ENCODE measurements at regions of chr10 and their contacts with region 1.

Region 1: GRCh38 chr10:31372439-31372838 is 53.4 kb downstream of the ZEB1 start:
- DNase-seq: no peak
- ATAC-seq: no peak
- H3K4me3 ChIP-seq: no peak overlapping the region
- H3K27ac ChIP-seq: no peak overlapping the region
- H3K4me1 ChIP-seq: no peaks in the 10 kb centered on the region
- H3K27me3 ChIP-seq: no peaks in the 10 kb centered on the region
- CTCF ChIP-seq: no peak

Region 2: DNA sequence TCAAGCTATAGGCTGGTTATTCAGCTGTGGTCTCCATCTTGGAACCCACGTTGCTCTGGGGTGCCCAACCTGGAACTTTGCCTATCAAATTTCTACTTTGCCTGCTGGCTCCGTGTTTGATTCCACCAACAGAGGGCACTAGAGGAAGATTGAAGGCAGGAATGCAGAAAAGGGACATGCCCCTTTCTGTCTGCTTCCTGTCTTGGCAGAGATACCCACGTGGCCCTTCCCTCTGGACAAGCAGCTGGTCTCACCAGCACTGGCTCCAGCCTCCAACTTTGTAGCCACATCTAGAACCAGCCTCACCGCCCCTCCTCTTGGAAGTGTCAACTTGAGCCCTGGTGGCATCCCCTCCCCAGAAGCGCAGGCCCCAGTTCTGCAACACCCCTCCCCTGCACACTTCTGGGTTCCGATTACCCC is 288.7 kb before region 1 on chr10:
- CTCF ChIA-PET with region 1: interaction called, 14 read pairs
- POLR2A ChIA-PET with region 1: no interaction called
- intact Hi-C with region 1: no loop called
- DNase-seq: peak; percentile 74
- ATAC-seq: peak; percentile 20; the same call in 1 of the 2 replicates
- H3K4me3 ChIP-seq: no peak overlapping the region
- H3K27ac ChIP-seq: no peak overlapping the region
- H3K4me1 ChIP-seq: no peaks in the 10 kb centered on the region
- H3K27me3 ChIP-seq: no peaks in the 10 kb centered on the region
- CTCF ChIP-seq: peak; percentile 65

Region 3: GRCh38 chr10:31219306-31219705 is 153.1 kb before region 1 on chr10:
- CTCF ChIA-PET with region 1: no interaction called
- POLR2A ChIA-PET with region 1: no interaction called
- intact Hi-C with region 1: no loop called
- DNase-seq: no peak
- ATAC-seq: no peak
- H3K4me3 ChIP-seq: no peak overlapping the region
- H3K27ac ChIP-seq: no peak overlapping the region
- H3K4me1 ChIP-seq: no peaks in the 10 kb centered on the region
- H3K27me3 ChIP-seq: no peaks in the 10 kb centered on the region
- CTCF ChIP-seq: no peak

Region 4: DNA sequence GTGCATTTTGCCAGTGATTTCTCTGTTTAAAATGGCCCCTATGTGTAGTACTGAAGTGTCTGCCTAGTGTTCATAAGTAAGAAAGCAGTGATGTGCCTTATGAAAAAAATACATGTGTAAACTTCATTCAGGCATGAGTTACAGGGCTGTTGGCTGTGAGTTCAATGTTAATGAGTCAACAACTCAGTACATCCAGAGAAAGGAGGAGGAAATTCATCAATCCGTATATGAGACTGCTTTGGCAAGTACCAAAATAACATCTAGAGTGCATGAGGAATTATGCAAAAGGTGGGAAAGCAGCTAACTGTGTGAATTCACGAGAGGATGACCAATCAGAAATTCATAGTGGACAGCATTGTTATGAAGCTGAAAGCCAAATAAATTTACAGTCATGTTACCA is 202.1 kb after region 1 on chr10:
- CTCF ChIA-PET with region 1: no interaction called
- POLR2A ChIA-PET with region 1: no interaction called
- intact Hi-C with region 1: no loop called
- DNase-seq: no peak
- ATAC-seq: no peak
- H3K4me3 ChIP-seq: no peak overlapping the region
- H3K27ac ChIP-seq: no peak overlapping the region
- H3K4me1 ChIP-seq: no peaks in the 10 kb centered on the region
- H3K27me3 ChIP-seq: no peaks in the 10 kb centered on the region
- CTCF ChIP-seq: no peak